ENCODE measurements at regions of chr9 and their contacts with region 1.

Region 1: DNA sequence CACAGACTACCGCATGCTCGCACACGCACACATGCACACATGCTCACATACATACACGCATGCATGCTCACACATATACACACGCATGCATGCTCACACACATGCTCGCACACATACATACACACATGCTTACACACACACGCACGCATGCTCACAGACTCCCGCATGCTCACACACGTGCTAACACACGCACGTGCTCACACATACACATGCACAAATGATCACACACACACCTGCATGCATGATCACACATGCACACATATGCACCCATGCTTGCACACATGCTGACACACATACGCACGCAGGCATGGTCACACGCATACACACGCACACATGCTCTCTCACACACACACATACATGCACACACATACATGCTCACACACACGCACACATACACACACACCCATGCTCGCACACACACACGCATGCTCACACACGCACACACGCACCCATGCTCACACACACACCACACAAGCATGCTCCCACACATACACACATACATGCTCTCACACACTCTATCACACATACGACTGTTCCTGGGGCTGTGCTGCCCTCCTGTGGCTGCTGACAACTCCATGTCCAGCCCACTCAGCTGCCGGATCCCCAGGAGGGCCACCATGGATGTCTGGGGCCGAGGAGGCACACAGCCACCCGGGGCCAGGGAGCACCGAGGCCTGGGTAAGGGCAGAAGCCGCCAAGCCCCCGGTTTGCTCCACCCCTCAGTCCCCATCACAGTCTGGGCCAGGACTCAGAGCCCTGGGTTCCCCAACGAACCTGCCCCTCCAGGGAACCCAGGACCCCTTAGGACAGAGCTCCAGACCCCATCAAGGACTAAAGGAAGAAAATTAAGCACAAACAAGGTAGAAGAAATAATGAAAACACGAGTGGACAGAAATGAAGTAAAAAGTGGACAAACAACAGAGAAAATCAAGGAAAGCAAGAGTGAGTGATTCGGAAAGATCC is 31.4 kb upstream of the EGFL7 start:
- DNase-seq: peak; percentile 83
- ATAC-seq: peak; percentile 90
- H3K4me3 Mint-ChIP-seq: no peak overlapping the region
- H3K27ac Mint-ChIP-seq: no peak overlapping the region
- H3K4me1 Mint-ChIP-seq: no peaks in the 10 kb centered on the region
- H3K27me3 Mint-ChIP-seq: peaks cover 3% of the 10 kb centered on the region

Region 2: GRCh38 chr9:136488247-136489214 is 142.8 kb before region 1 on chr9:
- CTCF ChIA-PET with region 1: interaction called, 55 read pairs
- POLR2A ChIA-PET with region 1: interaction called, 8 read pairs
- DNase-seq: peak; percentile 81
- ATAC-seq: peak; percentile 34
- H3K4me3 Mint-ChIP-seq: no peak overlapping the region
- H3K27ac Mint-ChIP-seq: no peak overlapping the region
- H3K4me1 Mint-ChIP-seq: peaks cover 8% of the 10 kb centered on the region
- H3K27me3 Mint-ChIP-seq: no peaks in the 10 kb centered on the region

Region 3: DNA sequence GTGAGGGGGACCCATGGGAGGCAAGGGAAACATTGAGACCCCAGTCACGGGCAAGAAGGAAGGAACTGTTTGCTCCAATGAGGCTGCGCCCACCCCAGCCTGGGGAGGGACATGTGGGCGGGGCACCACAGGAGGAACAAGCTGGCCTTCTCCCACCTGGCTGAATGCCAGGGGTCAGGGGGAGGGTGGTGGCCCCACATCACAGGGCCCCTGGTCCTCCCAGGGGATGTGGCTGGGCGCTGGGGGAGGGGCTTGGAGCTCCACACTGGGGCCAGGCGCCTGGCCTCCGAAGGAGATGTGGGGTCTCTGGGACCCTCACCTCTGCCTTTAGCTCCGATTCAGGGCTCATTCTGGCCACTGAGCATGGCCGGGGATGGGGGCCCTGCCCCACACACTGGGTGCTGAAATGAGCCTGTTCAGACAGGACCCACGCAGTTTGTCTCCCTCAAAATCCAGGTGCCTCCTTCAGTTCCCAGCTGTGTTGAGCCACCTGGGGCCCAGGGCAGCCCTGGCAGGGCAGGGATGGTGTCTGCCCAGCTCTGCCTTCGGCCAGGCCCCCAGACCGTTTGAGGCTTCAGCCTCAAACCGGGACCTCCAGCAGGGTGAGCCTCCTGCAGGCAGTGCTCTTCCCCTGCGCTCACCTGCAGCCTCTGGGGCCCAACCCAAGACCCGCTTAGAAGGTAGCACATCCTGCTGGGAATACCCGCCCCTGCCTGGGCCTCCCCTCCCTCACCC is 52.2 kb before region 1 on chr9:
- CTCF ChIA-PET with region 1: no interaction called
- POLR2A ChIA-PET with region 1: no interaction called
- DNase-seq: peak; percentile 36
- ATAC-seq: peak; percentile 60
- H3K4me3 Mint-ChIP-seq: no peak overlapping the region
- H3K27ac Mint-ChIP-seq: no peak overlapping the region
- H3K4me1 Mint-ChIP-seq: peaks cover 9% of the 10 kb centered on the region
- H3K27me3 Mint-ChIP-seq: no peaks in the 10 kb centered on the region